GM18951 (cell line): ENCODE measurements at regions of chr18 and their contacts with region 1.

Region 1: DNA sequence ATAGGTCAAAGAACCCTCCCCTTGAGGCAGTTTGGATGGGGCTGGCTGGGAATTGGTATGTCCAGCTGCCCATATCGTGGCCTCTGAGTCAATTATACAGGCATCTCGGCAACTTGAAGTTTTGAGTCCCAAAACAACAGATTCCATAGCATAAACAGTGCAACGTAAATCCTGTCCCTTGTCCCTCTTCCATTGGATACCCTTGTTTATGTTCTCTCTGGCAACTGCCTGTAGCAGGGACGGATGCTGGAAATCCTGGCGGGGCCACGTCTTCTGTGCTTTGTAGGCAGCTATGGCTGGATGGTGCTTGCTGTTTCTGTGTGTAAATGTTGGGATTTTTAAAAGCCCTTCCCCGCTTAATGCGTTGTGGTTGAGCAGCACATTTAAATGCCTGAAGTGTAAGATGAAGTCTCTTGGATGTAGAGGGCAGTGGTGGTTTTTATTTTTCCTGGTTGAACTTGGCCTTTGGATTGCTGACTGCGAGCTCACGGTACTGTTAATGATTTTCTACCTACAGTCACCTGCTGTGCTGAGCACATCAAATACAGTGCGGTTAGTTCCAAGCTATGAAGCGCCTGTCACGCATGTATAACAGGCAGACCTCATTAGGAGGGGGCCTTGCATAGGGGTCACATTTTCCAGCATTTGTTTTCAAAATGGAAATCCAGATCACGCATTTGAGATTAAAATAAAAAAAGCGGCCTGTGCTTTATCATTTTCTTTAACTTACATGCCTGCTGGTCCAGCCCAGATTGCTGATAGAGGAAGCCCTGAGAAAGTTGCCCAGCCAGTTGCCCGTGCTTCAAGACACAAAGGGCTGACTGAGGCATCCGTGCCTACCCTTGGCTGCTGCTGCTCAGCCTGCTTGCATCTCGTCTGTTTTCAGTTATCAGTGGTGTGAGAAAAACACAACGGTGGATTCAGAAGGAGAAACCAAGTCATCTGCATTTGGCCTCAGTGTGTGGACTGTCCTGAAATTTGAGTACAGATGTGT is 84.7 kb downstream of the NEDD4L start:
- POLR2A ChIP-seq: no peak

Region 2: DNA sequence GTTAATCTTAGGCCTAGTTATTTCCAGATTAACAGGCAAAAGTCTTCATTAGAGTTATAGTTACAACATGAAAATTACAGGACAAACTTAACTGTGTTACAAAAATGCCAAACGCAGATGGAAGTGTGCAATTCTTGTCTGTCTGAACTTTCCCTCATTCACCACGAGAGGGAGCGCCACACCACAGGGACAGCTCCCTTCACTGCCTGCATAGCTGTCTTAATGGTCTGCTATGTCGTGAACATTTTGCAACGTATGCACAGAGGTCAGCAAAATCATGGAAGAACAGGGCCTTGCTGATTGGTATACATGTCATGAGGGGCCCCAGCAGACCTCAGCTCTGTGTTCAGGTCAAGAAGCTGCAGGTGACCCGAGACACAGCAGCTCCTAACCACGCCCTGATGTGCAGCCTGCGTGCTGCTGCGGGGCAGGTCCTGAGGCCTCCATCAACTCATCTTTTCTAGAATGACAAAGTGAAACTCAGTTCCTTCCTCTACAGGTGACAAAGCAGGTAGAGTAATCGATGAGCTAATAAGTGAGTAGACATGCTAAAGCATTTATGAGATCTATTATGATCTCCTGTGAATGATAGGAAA is 246.8 kb before region 1 on chr18:
- in situ Hi-C with region 1: loop called (anchors 10 kb)
- POLR2A ChIP-seq: no peak

Region 3: GRCh38 chr18:58043491-58044379 is 84.9 kb before region 1 on chr18 and contains the start of gene NEDD4L:
- in situ Hi-C with region 1: loop called (anchors 10 kb)
- POLR2A ChIP-seq: no peak